ENCODE measurements at regions of chr11 and their contacts with region 1.

Region 1: DNA sequence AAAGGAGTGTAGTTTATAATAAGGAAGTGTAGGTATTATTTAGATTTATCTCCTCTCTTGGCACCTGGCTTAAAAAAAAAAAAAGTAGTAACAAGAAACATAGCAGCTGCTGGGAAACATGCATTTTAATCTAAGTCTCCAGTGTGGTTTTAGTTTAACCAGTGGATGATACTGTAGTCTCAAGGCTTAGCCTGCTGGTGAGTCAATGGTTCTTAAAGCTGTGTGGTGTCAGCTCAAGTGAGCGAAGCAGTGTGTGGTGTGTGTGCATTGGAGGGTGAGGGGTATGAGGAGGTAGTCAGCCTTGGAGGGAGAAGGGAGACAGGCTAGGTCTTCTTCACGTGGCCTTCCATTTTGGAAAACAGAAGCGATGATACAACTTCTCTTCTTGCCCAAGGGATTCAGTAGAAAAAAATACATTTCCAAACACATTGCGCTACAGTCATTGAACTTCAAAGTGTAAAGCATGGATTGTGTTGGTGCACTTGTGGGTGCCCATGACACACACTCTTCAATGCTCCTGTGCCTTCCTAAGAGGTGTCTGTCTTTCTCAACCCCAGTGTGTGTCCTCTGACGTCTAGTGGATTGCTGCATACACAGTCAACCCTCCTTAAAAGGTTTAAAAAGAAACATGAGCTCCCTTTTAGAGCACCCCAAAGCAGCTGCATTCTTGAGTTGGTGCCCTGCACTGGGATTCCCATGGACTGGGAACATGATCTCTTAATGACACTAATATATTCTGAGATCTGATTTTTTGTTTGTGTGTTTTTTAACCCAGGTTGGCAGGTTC is 40.1 kb downstream of the ZBTB16 start:
- DNase-seq: no peak
- H3K4me3 ChIP-seq: no peak overlapping the region
- H3K4me3 Mint-ChIP-seq: no peak overlapping the region
- H3K27ac ChIP-seq: no peak overlapping the region
- H3K27ac Mint-ChIP-seq: peak overlapping the region in 4 of 7 donors; percentile 19 to 88 (median 56)
- H3K4me1 ChIP-seq: peaks cover 20% of the 10 kb centered on the region
- H3K4me1 Mint-ChIP-seq: peaks cover 30 to 53% (median 38%) of the 10 kb centered on the region in 4 donors
- H3K27me3 ChIP-seq: no peaks in the 10 kb centered on the region
- H3K27me3 Mint-ChIP-seq: no peaks in the 10 kb centered on the region

Region 2: DNA sequence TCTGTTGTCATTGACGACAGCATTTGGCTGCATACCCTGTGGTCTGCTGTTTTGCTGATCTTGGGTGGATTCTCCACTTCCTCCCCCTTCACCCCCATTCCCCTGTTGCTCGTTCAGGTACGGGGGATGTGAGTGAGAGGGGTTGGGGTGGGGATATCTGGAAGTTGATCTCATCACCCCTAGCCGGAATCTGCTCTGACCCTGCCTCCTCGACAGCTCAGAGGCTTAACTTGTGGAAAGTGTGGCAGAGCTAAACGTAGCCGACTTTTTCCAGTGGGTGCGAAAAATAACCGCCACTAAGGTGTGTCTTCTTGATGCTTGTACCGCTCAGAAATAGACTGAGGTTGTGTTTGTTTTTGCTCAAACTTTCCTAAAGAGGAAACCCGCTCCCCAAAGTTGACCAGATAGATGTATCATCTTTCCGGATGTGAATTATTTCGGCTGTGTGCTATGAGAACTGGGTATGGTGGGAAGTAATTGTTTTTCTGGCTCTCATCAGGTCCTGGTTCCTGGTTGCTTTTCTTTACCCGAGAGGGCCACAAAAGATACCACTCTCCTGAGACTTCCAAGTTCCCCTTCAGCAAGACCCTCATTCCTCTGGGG is 33.4 kb before region 1 on chr11:
- CTCF ChIA-PET with region 1: no interaction called
- POLR2A ChIA-PET with region 1: interaction called, 3 read pairs
- intact Hi-C with region 1: loop called (anchors 5 kb)
- DNase-seq: peak in 4 of 5 donors; percentile 51 to 69 (median 62)
- H3K4me3 ChIP-seq: no peak overlapping the region
- H3K4me3 Mint-ChIP-seq: peak overlapping the region in 7 of 8 donors; percentile 24 to 62 (median 45)
- H3K27ac ChIP-seq: peak overlapping the region; percentile 0
- H3K27ac Mint-ChIP-seq: peak overlapping the region; percentile 54 to 91 (median 78)
- H3K4me1 ChIP-seq: peaks cover 6% of the 10 kb centered on the region
- H3K4me1 Mint-ChIP-seq: peaks cover 5 to 51% (median 24%) of the 10 kb centered on the region in 4 donors
- H3K27me3 ChIP-seq: peaks cover 4% of the 10 kb centered on the region
- H3K27me3 Mint-ChIP-seq: no peaks in the 10 kb centered on the region

Region 3: GRCh38 chr11:114115451-114115928 is 15.9 kb after region 1 on chr11:
- CTCF ChIA-PET with region 1: no interaction called
- POLR2A ChIA-PET with region 1: no interaction called
- intact Hi-C with region 1: no loop called
- DNase-seq: no peak
- H3K4me3 ChIP-seq: no peak overlapping the region
- H3K4me3 Mint-ChIP-seq: no peak overlapping the region
- H3K27ac ChIP-seq: no peak overlapping the region
- H3K27ac Mint-ChIP-seq: no peak overlapping the region
- H3K4me1 ChIP-seq: no peaks in the 10 kb centered on the region
- H3K4me1 Mint-ChIP-seq: peaks cover 8 to 21% (median 18%) of the 10 kb centered on the region in 4 donors
- H3K27me3 ChIP-seq: no peaks in the 10 kb centered on the region
- H3K27me3 Mint-ChIP-seq: peaks cover 7 to 10% of the 10 kb centered on the region in 2 donors